Heart right ventricle (tissue), 16 donors: ENCODE measurements at regions of chr2 and their contacts with region 1.

Region 1: GRCh38 chr2:205925373-205926337 is 160.3 kb downstream of the INO80D start:
- DNase-seq: peak; percentile 75 to 82
- ATAC-seq: peak; percentile 88 to 97 (median 92)
- H3K4me3 ChIP-seq: peak overlapping the region in 6 of 10 donors; percentile 9 to 41 (median 26)
- H3K27ac ChIP-seq: peak overlapping the region in 1 of 10 donors; percentile 55
- H3K4me1 ChIP-seq: peaks cover 1 to 24% (median 13%) of the 10 kb centered on the region in 9 donors
- H3K27me3 ChIP-seq: peaks cover 0 to 47% (median 24%) of the 10 kb centered on the region in 7 donors
- CTCF ChIP-seq: peak; percentile 81 to 98 (median 95)

Region 2: GRCh38 chr2:204219196-204219595 is 1706.5 kb before region 1 on chr2:
- intact Hi-C with region 1: loop called in 1 of 10 experiments (anchors 5 kb)
- DNase-seq: no peak
- ATAC-seq: no peak
- H3K4me3 ChIP-seq: no peak overlapping the region
- H3K27ac ChIP-seq: no peak overlapping the region
- H3K4me1 ChIP-seq: no peaks in the 10 kb centered on the region
- H3K27me3 ChIP-seq: no peaks in the 10 kb centered on the region
- CTCF ChIP-seq: no peak

Region 3: DNA sequence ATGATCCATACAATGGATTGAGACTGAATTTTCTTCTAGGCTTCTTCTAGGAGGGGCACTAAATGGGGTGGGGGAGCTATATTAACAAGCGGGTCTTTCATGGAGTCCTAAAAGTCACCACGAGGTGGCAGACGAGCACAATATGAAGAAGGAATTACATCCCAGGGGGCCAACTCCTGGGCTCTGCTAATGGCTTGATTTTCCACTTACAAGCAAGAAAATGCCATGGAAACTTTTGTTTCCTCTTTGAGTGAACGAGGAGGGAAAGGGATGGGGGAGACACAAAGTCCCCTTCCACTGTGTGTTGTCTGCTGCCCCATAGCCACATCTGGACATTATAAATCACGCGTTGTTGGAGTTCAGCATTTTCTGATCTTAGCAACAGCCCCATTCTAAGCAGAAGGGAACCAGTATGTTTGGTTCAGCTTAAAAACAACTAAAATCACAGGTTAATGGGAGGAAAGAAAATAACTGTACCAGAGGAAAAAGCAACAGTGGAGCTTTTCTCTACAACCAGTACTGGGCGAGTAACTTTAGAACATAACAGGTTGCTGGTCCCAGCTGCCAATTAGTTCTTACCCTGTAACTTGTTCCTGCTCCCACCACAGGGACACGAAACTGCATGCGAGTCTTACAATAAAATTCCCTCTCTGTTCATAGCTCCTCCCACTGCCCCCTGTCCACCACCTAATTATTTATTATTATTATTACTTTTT is 1665.3 kb before region 1 on chr2:
- intact Hi-C with region 1: loop called in 3 of 10 experiments (anchors 5 to 10 kb)
- DNase-seq: peak; percentile 15 to 76
- ATAC-seq: peak; percentile 59 to 87 (median 74)
- H3K4me3 ChIP-seq: no peak overlapping the region
- H3K27ac ChIP-seq: peak overlapping the region in 4 of 10 donors; percentile 13 to 41 (median 32)
- H3K4me1 ChIP-seq: peaks cover 0 to 34% (median 15%) of the 10 kb centered on the region in 9 donors
- H3K27me3 ChIP-seq: peaks cover 0 to 4% (median 0%) of the 10 kb centered on the region in 7 donors
- CTCF ChIP-seq: peak; percentile 67 to 84 (median 81)

Region 4: DNA sequence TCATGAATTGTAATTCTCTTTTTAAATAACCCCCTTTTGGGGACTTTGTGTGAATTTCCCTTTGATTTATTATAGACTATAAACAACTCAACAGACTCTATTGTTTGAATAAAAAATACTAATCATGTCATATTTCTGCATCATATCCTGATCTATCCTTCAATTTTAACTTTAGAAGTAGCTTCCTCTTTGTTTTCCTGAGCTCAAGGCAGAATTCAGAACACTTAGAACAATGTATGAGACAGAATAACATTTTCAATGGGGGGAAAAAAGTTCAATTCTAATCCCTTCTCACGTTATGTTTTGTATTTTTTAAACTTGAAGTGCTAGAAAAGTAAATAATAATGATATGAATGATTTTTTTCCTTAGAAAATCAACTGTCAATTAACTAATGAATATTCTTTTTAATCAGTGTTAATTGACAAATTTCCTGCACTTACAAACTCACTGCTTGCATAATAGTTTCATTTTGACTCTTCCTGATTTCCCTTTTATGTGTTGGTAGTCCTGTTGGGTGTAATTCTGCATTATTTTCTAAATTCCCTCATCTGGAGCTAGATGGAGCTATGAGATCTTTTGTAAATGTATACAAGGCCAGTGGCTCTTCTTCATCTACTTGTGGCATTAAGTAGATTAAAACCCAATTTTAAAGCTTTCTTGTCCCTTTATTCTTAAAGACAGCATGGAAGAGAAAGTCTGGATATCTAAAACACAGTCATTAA is 1054.3 kb before region 1 on chr2:
- intact Hi-C with region 1: loop called in 1 of 10 experiments (anchors 10 kb)
- DNase-seq: no peak
- ATAC-seq: peak in 5 of 8 donors; percentile 35 to 58 (median 42)
- H3K4me3 ChIP-seq: no peak overlapping the region
- H3K27ac ChIP-seq: peak overlapping the region in 3 of 10 donors; percentile 2 to 41 (median 25)
- H3K4me1 ChIP-seq: peaks cover 0 to 26% (median 18%) of the 10 kb centered on the region in 9 donors
- H3K27me3 ChIP-seq: no peaks in the 10 kb centered on the region
- CTCF ChIP-seq: peak in 8 of 9 donors; percentile 7 to 63 (median 46)

Region 5: DNA sequence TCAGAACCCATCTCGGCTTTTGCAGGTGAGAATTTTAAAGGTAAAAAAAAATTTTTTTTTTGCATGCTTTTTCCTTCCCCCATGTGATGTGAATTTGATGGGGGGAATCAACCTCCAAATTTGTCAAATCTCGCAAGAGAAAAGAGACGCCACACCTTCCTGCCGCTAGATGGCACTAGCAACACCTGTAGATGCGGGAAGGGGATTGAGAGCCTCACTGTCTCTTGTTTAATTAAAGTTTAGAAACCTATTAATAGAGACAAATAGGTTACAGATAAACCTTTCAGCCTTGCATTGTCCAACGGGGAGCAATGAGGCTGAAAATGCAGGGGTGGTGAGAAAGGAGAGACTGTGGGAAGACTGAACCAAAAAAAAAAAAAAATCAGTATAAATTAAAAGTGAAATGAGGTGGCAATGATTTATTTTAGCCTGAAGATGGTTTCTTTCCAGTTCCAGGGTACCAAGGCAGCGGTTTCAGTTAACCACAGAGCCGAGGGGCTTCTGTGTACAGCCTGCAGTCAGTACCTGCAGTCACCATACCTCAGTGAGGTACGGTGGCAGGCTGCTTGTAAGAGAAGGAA is 158.8 kb before region 1 on chr2:
- intact Hi-C with region 1: loop called in 8 of 10 experiments (anchors 2 to 10 kb)
- DNase-seq: peak; percentile 50 to 64
- ATAC-seq: peak in 1 of 8 donors; percentile 31
- H3K4me3 ChIP-seq: no peak overlapping the region
- H3K27ac ChIP-seq: no peak overlapping the region
- H3K4me1 ChIP-seq: peaks cover 0 to 28% (median 13%) of the 10 kb centered on the region in 9 donors
- H3K27me3 ChIP-seq: peaks cover 0 to 17% (median 4%) of the 10 kb centered on the region in 7 donors
- CTCF ChIP-seq: peak; percentile 71 to 93 (median 84)